Activated T-helper 1 cell treated with anti-CD3 and anti-CD28 coated beads, Interleukin-12 subunit alpha, Interleukin-12 subunit beta, Interleukin-2, Interleukin-4 antibody, amounts not matched to agents 30 ng/mL and 10 ng/mL and 1 ng/mL, durations not matched to agents 14 hours and 24 hours and 36 hours (primary cell): ENCODE measurements at regions of chr3 and their contacts with region 1.

Region 1: DNA sequence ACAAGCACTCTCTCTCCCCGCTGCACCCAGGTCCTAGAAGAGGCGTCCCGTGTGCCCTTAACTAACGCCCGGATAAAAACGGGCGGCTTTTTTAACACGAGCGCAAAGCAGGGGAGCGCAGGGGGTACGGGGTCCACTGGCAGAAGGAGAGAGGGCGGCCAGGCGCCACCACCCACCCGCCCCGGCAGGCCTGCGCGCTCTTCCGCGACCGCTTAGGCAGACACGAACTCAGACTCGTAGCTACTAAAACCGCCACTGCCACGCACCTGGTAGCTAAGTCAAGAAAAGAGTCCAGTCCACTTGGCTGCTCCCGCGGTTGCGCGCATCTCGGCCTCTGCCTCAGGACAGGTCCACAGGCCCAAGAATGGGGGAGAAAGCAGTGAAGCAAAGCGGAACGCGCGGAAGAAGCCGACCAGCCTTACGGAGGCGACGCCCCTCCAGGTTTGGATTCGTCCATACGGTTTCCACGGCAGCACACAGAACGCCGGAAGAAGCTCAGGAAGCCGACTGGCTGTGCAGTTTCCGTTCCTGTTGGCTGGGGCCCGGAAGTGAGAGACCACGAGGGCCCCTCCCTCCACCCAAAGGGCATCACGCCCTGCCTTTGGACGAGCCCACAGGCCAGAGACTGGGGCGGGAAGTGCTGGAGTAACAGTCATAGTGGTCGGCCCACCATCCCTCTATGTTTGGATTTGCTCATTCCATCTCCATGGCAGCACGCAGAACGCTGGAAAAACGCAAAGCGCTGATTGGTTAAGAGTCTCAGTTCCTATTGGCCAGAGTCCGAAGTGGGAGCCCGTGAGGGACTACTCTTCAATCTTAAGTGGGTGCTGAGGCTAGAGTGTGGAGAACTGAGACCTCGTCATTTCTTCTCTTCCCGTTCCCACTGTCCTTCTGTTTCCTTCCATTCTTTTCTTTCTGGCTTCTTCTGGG is at the start of gene ULK4:
- DNase-seq: peak; percentile 95
- H3K4me3 Mint-ChIP-seq: peak within 1 kb of the TSS; percentile 95
- H3K27ac Mint-ChIP-seq: peak within 1 kb of the TSS; percentile 93
- H3K4me1 Mint-ChIP-seq: peaks cover 16% of the 10 kb centered on the region
- H3K27me3 Mint-ChIP-seq: peaks cover 2% of the 10 kb centered on the region
- total RNA-seq, gene ULK4: 7.3 and 8.1 TPM in 2 replicates

Region 2: DNA sequence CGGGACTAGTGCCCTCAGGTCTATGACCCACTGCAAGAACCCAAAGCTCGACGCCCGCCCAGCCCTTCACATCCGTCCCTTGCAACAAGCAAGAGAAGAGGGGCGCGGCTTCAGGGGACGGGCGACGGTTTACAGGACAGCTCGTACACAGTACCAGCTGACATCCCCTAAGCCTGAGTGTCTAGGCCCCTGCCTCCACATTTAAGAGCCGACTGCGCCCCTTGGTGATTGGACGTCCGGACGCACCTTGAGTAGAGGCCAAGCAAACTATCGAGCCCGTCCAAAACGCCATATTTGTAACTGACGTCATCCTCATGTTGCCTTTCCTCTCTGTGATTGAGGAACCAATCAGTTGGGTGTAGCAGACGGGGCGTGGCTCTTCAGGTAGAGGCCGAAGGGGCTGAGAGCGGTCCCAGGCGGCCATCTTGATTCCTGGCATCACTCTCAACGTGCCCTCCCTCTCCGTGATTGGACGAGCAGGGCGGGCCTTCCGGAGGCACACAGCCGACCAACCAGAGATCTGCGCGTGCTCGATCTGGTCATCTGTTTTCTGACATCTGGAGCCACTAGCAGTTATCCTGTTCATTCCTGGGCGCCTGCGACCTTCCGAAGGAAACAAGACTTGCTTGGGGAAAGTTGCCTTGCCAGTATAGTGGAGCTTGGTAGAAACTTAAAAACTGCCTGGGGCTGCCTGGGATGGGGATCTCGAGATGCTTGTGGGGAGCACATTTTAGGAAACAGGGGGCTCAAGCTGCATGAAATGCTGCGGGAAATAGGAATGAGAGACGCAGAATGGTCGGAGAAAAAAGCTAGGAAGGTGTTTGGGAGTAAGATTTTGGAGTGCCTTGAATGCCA is 1508.9 kb before region 1 on chr3:
- intact Hi-C with region 1: loop called (anchors 1 kb)
- DNase-seq: peak; percentile 95
- H3K4me3 Mint-ChIP-seq: peak overlapping the region; percentile 91
- H3K27ac Mint-ChIP-seq: peak overlapping the region; percentile 96
- H3K4me1 Mint-ChIP-seq: peaks cover 40% of the 10 kb centered on the region
- H3K27me3 Mint-ChIP-seq: no peaks in the 10 kb centered on the region

Region 3: GRCh38 chr3:40971191-40972168 is 990.5 kb before region 1 on chr3:
- intact Hi-C with region 1: loop called (anchors 1 kb)
- DNase-seq: peak; percentile 24
- H3K4me3 Mint-ChIP-seq: peak overlapping the region; percentile 62
- H3K27ac Mint-ChIP-seq: peak overlapping the region; percentile 97
- H3K4me1 Mint-ChIP-seq: peaks cover 64% of the 10 kb centered on the region
- H3K27me3 Mint-ChIP-seq: peaks cover 2% of the 10 kb centered on the region

Region 4: DNA sequence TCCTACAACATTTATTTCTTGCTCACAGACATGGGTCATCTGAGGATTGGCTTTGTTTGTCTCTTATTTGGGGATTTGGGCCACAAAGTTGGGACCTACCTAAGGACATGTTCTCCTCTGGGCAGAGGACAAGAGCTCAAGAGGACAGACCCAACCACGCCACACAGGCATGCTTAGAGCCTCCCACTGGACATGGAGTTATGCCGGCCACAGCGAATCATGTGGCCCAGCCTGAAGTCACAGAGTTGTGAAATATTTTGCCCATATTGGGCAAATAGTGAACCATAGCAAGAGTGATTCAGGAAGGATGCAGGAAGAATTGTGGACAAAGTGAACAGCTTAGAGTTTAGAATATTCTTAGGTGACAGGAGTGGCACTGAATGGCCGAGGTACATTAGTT is 139.0 kb after region 1 on chr3:
- intact Hi-C with region 1: loop called (anchors 1 kb)
- DNase-seq: no peak
- H3K4me3 Mint-ChIP-seq: no peak overlapping the region
- H3K27ac Mint-ChIP-seq: no peak overlapping the region
- H3K4me1 Mint-ChIP-seq: peaks cover 35% of the 10 kb centered on the region
- H3K27me3 Mint-ChIP-seq: no peaks in the 10 kb centered on the region

Region 5: DNA sequence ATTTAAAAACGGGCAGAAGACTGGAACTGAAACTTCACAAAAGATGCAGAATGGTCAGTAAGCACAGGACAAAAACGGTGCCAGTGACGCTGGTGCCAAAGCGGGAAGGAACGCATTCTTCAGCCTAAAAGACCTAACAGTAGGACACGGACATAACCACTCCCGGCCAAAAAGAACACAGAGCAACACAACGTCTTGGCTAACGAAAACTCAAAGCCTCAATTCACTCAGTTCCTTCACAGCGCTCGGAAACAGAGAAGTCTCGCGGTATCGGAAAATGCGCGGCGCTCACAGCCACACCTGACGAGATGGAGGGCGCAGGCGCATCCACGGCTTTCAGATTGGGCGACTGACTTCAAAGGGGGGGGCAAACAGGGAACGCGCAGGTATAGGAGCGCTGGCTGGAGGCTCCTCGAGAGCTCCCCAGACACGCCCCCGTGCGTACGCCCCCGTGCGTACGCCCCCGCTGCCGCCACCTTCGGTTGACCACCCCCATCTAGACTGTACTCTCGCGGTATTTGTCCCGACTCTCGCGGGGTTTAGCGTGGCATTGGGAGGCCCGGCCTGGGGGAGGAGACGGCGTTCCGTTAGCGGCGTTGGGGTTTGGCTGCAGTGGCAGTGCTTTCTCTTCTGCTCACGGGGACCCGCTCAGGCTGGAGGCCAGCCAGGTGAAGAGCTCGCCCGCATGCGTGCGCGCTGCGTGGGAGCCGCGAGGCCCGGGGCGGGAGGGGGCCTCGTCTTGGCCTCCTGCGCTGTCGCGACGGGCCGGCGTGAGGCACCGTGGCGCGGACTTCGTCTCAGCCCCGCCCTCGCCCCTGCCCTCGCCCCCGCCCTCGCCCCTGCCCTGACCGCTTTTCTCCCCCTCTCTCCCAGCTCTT is 638.3 kb after region 1 on chr3 and contains the start of gene NKTR:
- intact Hi-C with region 1: loop called (anchors 1 kb)
- DNase-seq: peak; percentile 99
- H3K4me3 Mint-ChIP-seq: peak within 1 kb of the TSS; percentile 91
- H3K27ac Mint-ChIP-seq: peak within 1 kb of the TSS; percentile 98
- H3K4me1 Mint-ChIP-seq: peaks cover 40% of the 10 kb centered on the region
- H3K27me3 Mint-ChIP-seq: no peaks in the 10 kb centered on the region
- total RNA-seq, gene NKTR: 76.9 and 79.7 TPM in 2 replicates